ENCODE measurements at regions of chr7 and their contacts with region 1.

Region 1: GRCh38 chr7:29189743-29190201 is 4.8 kb upstream of the CHN2 start:
- DNase-seq: peak; percentile 74
- ATAC-seq: peak; percentile 75
- H3K4me3 ChIP-seq: peak overlapping the region; percentile 51 to 72 (median 55)
- H3K27ac ChIP-seq: peak overlapping the region; percentile 84
- H3K4me1 ChIP-seq: peaks cover 54% of the 10 kb centered on the region
- H3K27me3 ChIP-seq: no peaks in the 10 kb centered on the region; a peak in 1 of 5 replicates
- CTCF ChIP-seq: peak; percentile 97
- EP300 ChIP-seq: 0 out of 4 replicates have a peak, but pooled peaks of 1 of the 2 experiments have one; percentile 22
- POLR2A ChIP-seq: no peak
- RAD21 ChIP-seq: peak; percentile 94

Region 2: DNA sequence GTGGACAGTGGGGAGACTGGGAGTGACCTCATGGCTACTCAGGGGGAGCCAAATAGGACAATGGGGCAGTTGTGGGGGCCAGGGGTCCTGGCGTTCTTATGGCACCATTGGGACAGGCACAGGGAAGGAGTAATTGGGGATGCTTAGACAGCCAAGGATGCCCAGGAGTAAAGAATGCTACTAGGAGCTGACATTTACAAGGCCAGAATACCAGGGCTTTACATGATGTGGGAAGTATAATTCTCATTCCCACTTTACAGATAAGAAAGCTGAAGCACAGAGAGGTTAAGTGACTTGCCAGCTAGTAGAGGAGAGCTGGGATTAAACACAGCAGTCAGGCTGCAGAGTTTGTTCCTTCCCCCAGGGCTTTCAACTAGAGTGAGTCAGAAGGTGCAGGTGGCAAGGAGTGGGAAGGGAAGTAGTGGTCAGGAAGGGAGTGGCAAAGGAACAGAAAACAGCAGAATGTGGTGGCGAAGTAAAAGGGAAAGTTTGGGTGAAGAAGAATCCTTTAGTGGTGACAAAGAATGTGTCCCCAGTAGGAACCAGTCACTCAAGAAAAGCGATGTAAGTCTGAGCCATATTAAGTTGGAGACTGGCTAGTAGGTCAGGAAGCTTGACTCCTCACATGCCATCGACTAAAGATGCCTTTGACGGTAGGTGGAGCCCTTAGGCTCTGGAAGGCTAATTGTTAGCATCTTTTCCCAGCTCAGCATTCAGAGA is 76.2 kb before region 1 on chr7:
- CTCF ChIA-PET with region 1: no interaction called
- POLR2A ChIA-PET with region 1: interaction called, 24 read pairs
- in situ Hi-C with region 1: no loop called
- intact Hi-C with region 1: no loop called
- DNase-seq: peak; percentile 24
- ATAC-seq: peak; percentile 50; the same call in 2 of the 3 replicates
- H3K4me3 ChIP-seq: no peak overlapping the region
- H3K27ac ChIP-seq: no peak overlapping the region
- H3K4me1 ChIP-seq: peaks cover 24% of the 10 kb centered on the region
- H3K27me3 ChIP-seq: no peaks in the 10 kb centered on the region
- CTCF ChIP-seq: peak; percentile 67
- EP300 ChIP-seq: no peak
- POLR2A ChIP-seq: no peak
- RAD21 ChIP-seq: no peak

Region 3: DNA sequence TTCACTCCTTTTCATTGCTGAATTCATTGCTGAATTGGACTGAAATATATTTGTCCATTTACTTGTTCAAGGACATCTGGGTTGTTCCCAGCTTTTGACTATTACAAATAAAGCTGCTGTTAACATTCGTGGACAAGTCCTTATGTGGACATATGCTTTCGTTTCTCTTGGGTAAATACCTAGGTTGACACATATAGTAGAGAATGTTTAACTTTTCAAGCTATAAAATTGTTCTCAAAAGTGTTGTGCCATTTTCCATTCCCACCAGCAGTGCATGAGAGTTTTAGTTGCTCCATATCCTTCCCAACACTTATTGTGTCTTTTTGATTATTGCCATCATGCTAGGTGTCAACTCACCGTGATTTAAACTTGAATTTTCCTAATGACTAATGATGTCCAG is 25.9 kb before region 1 on chr7:
- CTCF ChIA-PET with region 1: no interaction called
- POLR2A ChIA-PET with region 1: interaction called, 15 read pairs
- in situ Hi-C with region 1: no loop called
- intact Hi-C with region 1: no loop called
- DNase-seq: peak; percentile 92
- ATAC-seq: peak; percentile 96
- H3K4me3 ChIP-seq: peak overlapping the region in 1 of 3 experiments; percentile 3; a peak in 1 of 6 replicates
- H3K27ac ChIP-seq: no peak overlapping the region
- H3K4me1 ChIP-seq: peaks cover 16% of the 10 kb centered on the region
- H3K27me3 ChIP-seq: no peaks in the 10 kb centered on the region
- CTCF ChIP-seq: no peak
- EP300 ChIP-seq: 0 out of 4 replicates have a peak, but pooled peaks of 1 of the 2 experiments have one; percentile 49
- POLR2A ChIP-seq: no peak
- RAD21 ChIP-seq: no peak

Region 4: GRCh38 chr7:29248713-29249382 is 59.1 kb after region 1 on chr7:
- CTCF ChIA-PET with region 1: no interaction called
- POLR2A ChIA-PET with region 1: interaction called, 7 read pairs
- in situ Hi-C with region 1: no loop called
- intact Hi-C with region 1: loop called (anchors 5 kb)
- DNase-seq: peak; percentile 88
- ATAC-seq: peak; percentile 95
- H3K4me3 ChIP-seq: no peak overlapping the region
- H3K27ac ChIP-seq: peak overlapping the region; percentile 66
- H3K4me1 ChIP-seq: peaks cover 53% of the 10 kb centered on the region
- H3K27me3 ChIP-seq: no peaks in the 10 kb centered on the region
- CTCF ChIP-seq: no peak
- EP300 ChIP-seq: peak in 1 of 2 experiments; percentile 86; a peak in 2 of 4 replicates
- POLR2A ChIP-seq: no peak
- RAD21 ChIP-seq: peak; percentile 44; the same call in 1 of the 2 replicates

Region 5: GRCh38 chr7:29337546-29338116 is 147.9 kb after region 1 on chr7:
- CTCF ChIA-PET with region 1: no interaction called
- POLR2A ChIA-PET with region 1: interaction called, 14 read pairs
- in situ Hi-C with region 1: loop called (anchors 5 kb)
- intact Hi-C with region 1: loop called (anchors 2 kb)
- DNase-seq: no peak
- ATAC-seq: no peak; the same call in 2 of the 3 replicates
- H3K4me3 ChIP-seq: peak overlapping the region in 2 of 3 experiments; percentile 1 to 9; a peak in 2 of 6 replicates
- H3K27ac ChIP-seq: peak overlapping the region; percentile 56
- H3K4me1 ChIP-seq: peaks cover 85% of the 10 kb centered on the region
- H3K27me3 ChIP-seq: no peaks in the 10 kb centered on the region
- CTCF ChIP-seq: no peak
- EP300 ChIP-seq: no peak
- POLR2A ChIP-seq: no peak
- RAD21 ChIP-seq: no peak

Region 6: GRCh38 chr7:29940199-29940598 is 750.4 kb after region 1 on chr7:
- CTCF ChIA-PET with region 1: no interaction called
- POLR2A ChIA-PET with region 1: no interaction called
- in situ Hi-C with region 1: no loop called
- intact Hi-C with region 1: loop called (anchors 5 kb)
- DNase-seq: no peak
- ATAC-seq: no peak
- H3K4me3 ChIP-seq: no peak overlapping the region
- H3K27ac ChIP-seq: no peak overlapping the region
- H3K4me1 ChIP-seq: no peaks in the 10 kb centered on the region
- H3K27me3 ChIP-seq: no peaks in the 10 kb centered on the region
- CTCF ChIP-seq: no peak
- EP300 ChIP-seq: no peak
- POLR2A ChIP-seq: no peak
- RAD21 ChIP-seq: no peak

Measured in HepG2 (cell line).